ENCODE measurements at regions of chr2 and their contacts with region 1.

Region 1: GRCh38 chr2:178891265-178891958 is 84.2 kb upstream of the TTN start:
- DNase-seq: peak in 1 of 2 donors; percentile 86
- H3K4me3 ChIP-seq: no peak overlapping the region
- H3K27ac ChIP-seq: no peak overlapping the region
- H3K4me1 ChIP-seq: peaks cover 0 to 20% of the 10 kb centered on the region in 2 donors
- H3K27me3 ChIP-seq: no peaks in the 10 kb centered on the region
- CTCF ChIP-seq: peak; percentile 82 to 94 (median 90)

Region 2: GRCh38 chr2:178782236-178782635 is 109.2 kb before region 1 on chr2:
- intact Hi-C with region 1: no loop called
- DNase-seq: no peak
- H3K4me3 ChIP-seq: no peak overlapping the region
- H3K27ac ChIP-seq: no peak overlapping the region
- H3K4me1 ChIP-seq: no peaks in the 10 kb centered on the region
- H3K27me3 ChIP-seq: no peaks in the 10 kb centered on the region
- CTCF ChIP-seq: no peak

Region 3: DNA sequence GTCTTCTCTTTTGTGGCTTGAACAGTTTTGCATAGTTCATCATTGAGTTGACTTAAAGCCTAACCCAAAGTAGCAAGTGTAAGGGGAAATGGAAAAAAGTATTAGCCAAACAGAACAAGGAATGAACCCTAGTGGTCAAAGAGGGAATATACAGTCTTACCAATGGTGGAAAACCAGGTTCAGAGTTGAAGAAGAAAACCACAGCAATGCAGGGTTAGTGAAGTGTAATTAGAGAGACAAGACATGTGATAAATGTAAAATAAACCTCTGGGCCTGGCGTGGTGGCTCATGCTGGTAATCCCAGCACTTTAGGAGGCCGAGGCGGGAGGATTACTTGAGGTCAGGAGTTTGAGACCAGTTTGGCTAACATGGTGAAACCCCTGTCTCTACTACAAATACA is 86.6 kb before region 1 on chr2:
- intact Hi-C with region 1: loop called (anchors 5 kb)
- DNase-seq: no peak
- H3K4me3 ChIP-seq: no peak overlapping the region
- H3K27ac ChIP-seq: peak overlapping the region; percentile 36 to 45
- H3K4me1 ChIP-seq: no peaks in the 10 kb centered on the region
- H3K27me3 ChIP-seq: no peaks in the 10 kb centered on the region
- CTCF ChIP-seq: peak in 1 of 3 experiments; percentile 33

Region 4: GRCh38 chr2:178863856-178864620 is 27.4 kb before region 1 on chr2:
- intact Hi-C with region 1: loop called (anchors 5 kb)
- DNase-seq: peak; percentile 45 to 87
- H3K4me3 ChIP-seq: no peak overlapping the region
- H3K27ac ChIP-seq: peak overlapping the region; percentile 85 to 87
- H3K4me1 ChIP-seq: peaks cover 8 to 35% of the 10 kb centered on the region in 2 donors
- H3K27me3 ChIP-seq: no peaks in the 10 kb centered on the region
- CTCF ChIP-seq: no peak

Region 5: GRCh38 chr2:178874529-178875240 is 16.7 kb before region 1 on chr2:
- intact Hi-C with region 1: loop called (anchors 2 kb)
- DNase-seq: no peak
- H3K4me3 ChIP-seq: peak overlapping the region in 1 of 2 donors; percentile 39
- H3K27ac ChIP-seq: peak overlapping the region; percentile 89
- H3K4me1 ChIP-seq: peaks cover 0 to 19% of the 10 kb centered on the region in 2 donors
- H3K27me3 ChIP-seq: no peaks in the 10 kb centered on the region
- CTCF ChIP-seq: no peak

Measured in ascending aorta (tissue), 2 donors.